ENCODE measurements at regions of chr2 and their contacts with region 1.

Region 1: GRCh38 chr2:182577816-182578215 is 138.2 kb upstream of the DNAJC10 start:
- DNase-seq: peak; percentile 83
- H3K4me3 ChIP-seq: no peak overlapping the region
- H3K27ac ChIP-seq: peak overlapping the region; percentile 89
- H3K4me1 ChIP-seq: peaks cover 26% of the 10 kb centered on the region
- H3K27me3 ChIP-seq: no peaks in the 10 kb centered on the region
- CTCF ChIP-seq: no peak

Region 2: DNA sequence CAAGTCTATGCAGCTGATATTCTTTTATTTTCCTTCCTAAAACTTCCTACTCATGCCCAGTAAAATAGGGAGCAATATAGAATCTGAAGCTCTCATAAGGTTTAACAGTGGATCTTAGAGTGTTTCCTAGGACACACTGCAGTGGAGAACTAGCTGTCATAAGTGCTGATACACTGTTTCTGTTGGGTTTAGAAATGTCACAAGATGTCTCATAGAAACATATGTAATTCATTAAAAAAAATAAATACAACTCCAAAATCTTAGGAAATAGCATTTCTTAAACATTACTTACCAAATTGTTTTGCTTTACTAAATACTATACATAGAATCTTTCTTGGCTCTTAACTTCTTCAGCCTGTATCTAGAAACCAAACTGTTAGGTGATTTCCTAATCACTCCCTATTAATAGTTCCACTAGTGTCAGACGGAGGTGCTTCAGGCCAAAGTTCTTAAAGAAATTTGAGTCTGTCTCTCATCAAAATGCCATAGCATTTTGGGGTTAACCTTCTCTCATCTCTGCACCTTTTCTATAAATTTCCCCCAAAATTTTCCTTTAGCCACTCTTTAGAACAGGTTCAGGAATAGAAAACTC is 1014.6 kb before region 1 on chr2:
- CTCF ChIA-PET with region 1: no interaction called
- POLR2A ChIA-PET with region 1: no interaction called
- intact Hi-C with region 1: no loop called
- DNase-seq: no peak
- H3K4me3 ChIP-seq: no peak overlapping the region
- H3K27ac ChIP-seq: no peak overlapping the region
- H3K4me1 ChIP-seq: peaks cover 4% of the 10 kb centered on the region
- H3K27me3 ChIP-seq: no peaks in the 10 kb centered on the region
- CTCF ChIP-seq: no peak

Region 3: GRCh38 chr2:181742922-181743722 is 834.7 kb before region 1 on chr2:
- CTCF ChIA-PET with region 1: no interaction called
- POLR2A ChIA-PET with region 1: no interaction called
- intact Hi-C with region 1: loop called (anchors 5 kb)
- DNase-seq: peak; percentile 83
- H3K4me3 ChIP-seq: no peak overlapping the region
- H3K27ac ChIP-seq: peak overlapping the region; percentile 22
- H3K4me1 ChIP-seq: peaks cover 24% of the 10 kb centered on the region
- H3K27me3 ChIP-seq: no peaks in the 10 kb centered on the region
- CTCF ChIP-seq: peak; percentile 86

Region 4: GRCh38 chr2:182186132-182186735 is 391.6 kb before region 1 on chr2:
- CTCF ChIA-PET with region 1: interaction called, 9 read pairs
- POLR2A ChIA-PET with region 1: no interaction called
- intact Hi-C with region 1: loop called (anchors 2 kb)
- DNase-seq: peak; percentile 80
- H3K4me3 ChIP-seq: no peak overlapping the region
- H3K27ac ChIP-seq: peak overlapping the region; percentile 40
- H3K4me1 ChIP-seq: peaks cover 23% of the 10 kb centered on the region
- H3K27me3 ChIP-seq: no peaks in the 10 kb centered on the region
- CTCF ChIP-seq: peak; percentile 84

Region 5: DNA sequence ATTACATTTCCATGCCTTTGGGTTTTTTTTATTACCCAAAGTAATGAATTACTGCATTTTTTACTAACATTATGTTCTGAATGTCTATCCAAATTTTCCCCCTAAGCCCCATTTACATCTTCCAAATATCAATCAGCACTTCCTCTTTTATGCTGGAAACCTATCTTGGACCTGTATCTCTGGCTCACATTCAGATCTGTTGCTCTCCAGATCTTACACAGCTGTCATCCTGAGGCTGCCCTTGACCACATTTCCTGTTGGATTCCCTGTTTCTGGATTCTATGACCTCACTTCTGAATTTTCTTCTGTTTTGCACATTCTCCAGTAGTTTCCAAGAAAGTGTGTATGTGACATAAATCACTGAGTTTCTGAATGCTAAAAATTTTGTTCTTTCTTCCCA is 297.7 kb before region 1 on chr2:
- CTCF ChIA-PET with region 1: interaction called, 6 read pairs
- POLR2A ChIA-PET with region 1: interaction called, 5 read pairs
- intact Hi-C with region 1: loop called (anchors 1 kb)
- DNase-seq: peak; percentile 43
- H3K4me3 ChIP-seq: no peak overlapping the region
- H3K27ac ChIP-seq: peak overlapping the region; percentile 12
- H3K4me1 ChIP-seq: peaks cover 4% of the 10 kb centered on the region
- H3K27me3 ChIP-seq: no peaks in the 10 kb centered on the region
- CTCF ChIP-seq: no peak

Region 6: GRCh38 chr2:182359990-182360662 is 217.7 kb before region 1 on chr2:
- CTCF ChIA-PET with region 1: no interaction called
- POLR2A ChIA-PET with region 1: no interaction called
- intact Hi-C with region 1: loop called (anchors 2 kb)
- DNase-seq: peak; percentile 87
- H3K4me3 ChIP-seq: no peak overlapping the region
- H3K27ac ChIP-seq: peak overlapping the region; percentile 52
- H3K4me1 ChIP-seq: peaks cover 34% of the 10 kb centered on the region
- H3K27me3 ChIP-seq: no peaks in the 10 kb centered on the region
- CTCF ChIP-seq: no peak

Region 7: DNA sequence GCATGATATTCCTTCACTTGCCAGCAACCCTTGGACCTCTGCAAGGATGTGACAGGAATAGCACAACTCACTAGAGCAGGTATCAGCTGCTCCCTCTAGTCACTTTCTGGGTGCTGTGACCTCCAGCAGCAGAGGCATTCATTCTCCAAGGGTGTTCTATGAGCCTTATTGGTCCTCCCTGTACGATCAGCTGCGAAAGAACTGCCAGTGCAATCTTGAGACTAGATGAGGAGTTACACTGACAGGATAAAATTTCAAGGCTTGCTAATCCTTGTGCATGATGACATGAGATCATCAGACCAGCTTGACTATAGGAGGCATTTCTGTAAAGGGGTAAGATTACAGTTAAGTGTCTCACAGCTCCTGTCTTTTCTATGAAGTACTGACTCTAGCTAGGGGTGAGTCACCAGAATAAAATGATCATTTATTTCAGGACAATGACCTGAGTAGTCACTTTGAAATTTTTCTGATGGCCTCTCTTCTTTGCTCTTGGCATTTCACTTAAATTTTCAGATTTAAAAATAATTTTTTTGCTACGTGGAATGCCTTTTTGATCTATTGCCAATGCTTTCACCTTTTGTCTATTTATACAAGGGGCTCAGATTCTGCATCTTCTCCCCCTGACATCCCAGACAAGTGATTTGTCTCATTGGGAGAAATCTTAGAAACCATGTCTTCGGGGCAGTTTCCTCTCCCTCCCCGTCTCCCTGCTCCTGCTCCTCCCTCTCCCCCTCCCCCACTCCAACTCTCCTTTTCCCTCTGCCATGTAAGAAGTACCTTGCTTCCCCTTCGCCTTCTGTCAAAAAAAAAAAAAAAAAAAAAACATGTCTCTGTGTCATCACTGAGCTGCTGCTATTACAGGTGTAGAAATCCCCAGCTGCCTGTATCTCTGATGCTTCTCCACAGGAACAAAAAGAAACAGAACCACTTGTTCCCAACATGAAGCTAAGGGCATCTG is 337.8 kb after region 1 on chr2:
- CTCF ChIA-PET with region 1: interaction called, 6 read pairs
- POLR2A ChIA-PET with region 1: interaction called, 6 read pairs
- intact Hi-C with region 1: loop called (anchors 1 kb)
- DNase-seq: peak; percentile 95
- H3K4me3 ChIP-seq: no peak overlapping the region
- H3K27ac ChIP-seq: peak overlapping the region; percentile 93
- H3K4me1 ChIP-seq: peaks cover 77% of the 10 kb centered on the region
- H3K27me3 ChIP-seq: no peaks in the 10 kb centered on the region
- CTCF ChIP-seq: no peak

Region 8: DNA sequence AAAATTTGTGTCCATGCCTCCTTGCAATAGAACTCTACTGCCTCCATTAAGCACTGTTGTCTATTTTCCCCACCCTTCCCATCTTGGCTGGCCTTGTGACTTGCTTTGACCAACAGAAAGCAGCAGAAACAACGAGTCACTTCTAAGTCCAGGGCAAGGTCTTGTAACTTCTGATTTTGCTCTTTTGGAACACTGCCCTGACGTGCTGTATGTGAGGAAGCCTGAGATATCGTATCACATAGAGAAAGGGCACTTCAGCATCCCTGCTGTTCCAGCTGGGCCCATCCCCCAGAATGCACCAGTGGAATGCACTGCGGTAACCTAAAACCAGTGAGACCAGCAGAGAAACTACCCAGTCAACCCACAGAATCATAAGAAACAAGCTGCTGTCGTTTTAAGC is 432.3 kb after region 1 on chr2:
- CTCF ChIA-PET with region 1: no interaction called
- POLR2A ChIA-PET with region 1: no interaction called
- intact Hi-C with region 1: loop called (anchors 5 kb)
- DNase-seq: peak; percentile 90
- H3K4me3 ChIP-seq: no peak overlapping the region
- H3K27ac ChIP-seq: peak overlapping the region; percentile 87
- H3K4me1 ChIP-seq: peaks cover 94% of the 10 kb centered on the region
- H3K27me3 ChIP-seq: no peaks in the 10 kb centered on the region
- CTCF ChIP-seq: no peak

Measured in A673 (cell line).